Panc1 (cell line): ENCODE measurements at regions of chr18 and their contacts with region 1.

Region 1: DNA sequence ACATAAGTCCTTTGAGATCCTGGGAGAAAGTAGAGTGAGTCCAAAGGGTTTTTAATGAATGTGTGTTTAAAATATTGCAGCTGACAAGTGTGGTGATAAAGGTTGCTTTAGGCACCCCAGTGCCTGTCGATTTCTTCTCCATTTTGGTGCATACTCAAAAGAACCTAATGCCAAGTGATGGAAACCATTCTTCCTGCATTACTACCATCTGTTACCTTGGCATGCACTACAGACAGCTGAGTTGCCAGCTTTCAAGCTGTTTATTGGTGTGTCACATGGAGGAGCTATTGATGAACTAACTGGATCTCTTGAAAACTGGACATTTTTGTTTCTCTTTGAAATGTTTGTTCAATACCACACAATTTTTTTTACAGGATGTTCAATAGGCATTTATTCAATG is 350.0 kb downstream of the AKAIN1 start:
- DNase-seq: no peak
- ATAC-seq: no peak
- H3K4me3 ChIP-seq: no peak overlapping the region
- H3K27ac ChIP-seq: no peak overlapping the region
- H3K4me1 ChIP-seq: no peaks in the 10 kb centered on the region
- H3K27me3 ChIP-seq: no peaks in the 10 kb centered on the region
- CTCF ChIP-seq: no peak

Region 2: GRCh38 chr18:4858378-4859127 is 11.5 kb after region 1 on chr18:
- CTCF ChIA-PET with region 1: no interaction called
- POLR2A ChIA-PET with region 1: no interaction called
- in situ Hi-C with region 1: no loop called
- intact Hi-C with region 1: loop called (anchors 1 kb)
- DNase-seq: no peak
- ATAC-seq: no peak
- H3K4me3 ChIP-seq: no peak overlapping the region
- H3K27ac ChIP-seq: no peak overlapping the region
- H3K4me1 ChIP-seq: no peaks in the 10 kb centered on the region
- H3K27me3 ChIP-seq: no peaks in the 10 kb centered on the region
- CTCF ChIP-seq: no peak